Panc1 (cell line): ENCODE measurements at regions of chr16 and their contacts with region 1.

Region 1: GRCh38 chr16:16127469-16128116 is 95.7 kb downstream of the ABCC6 start:
- DNase-seq: peak; percentile 62
- ATAC-seq: peak; percentile 88
- H3K4me3 ChIP-seq: no peak overlapping the region
- H3K27ac ChIP-seq: 0 out of 2 replicates have a peak overlapping the region, but pooled peaks have one; percentile 15
- H3K4me1 ChIP-seq: no peaks in the 10 kb centered on the region
- H3K27me3 ChIP-seq: no peaks in the 10 kb centered on the region
- CTCF ChIP-seq: peak; percentile 96

Region 2: GRCh38 chr16:15765880-15766279 is 361.7 kb before region 1 on chr16:
- CTCF ChIA-PET with region 1: no interaction called
- POLR2A ChIA-PET with region 1: no interaction called
- in situ Hi-C with region 1: no loop called
- intact Hi-C with region 1: loop called (anchors 2 kb)
- DNase-seq: peak; percentile 36
- ATAC-seq: peak; percentile 93
- H3K4me3 ChIP-seq: no peak overlapping the region
- H3K27ac ChIP-seq: no peak overlapping the region
- H3K4me1 ChIP-seq: no peaks in the 10 kb centered on the region
- H3K27me3 ChIP-seq: no peaks in the 10 kb centered on the region; the same call in 1 of the 2 replicates
- CTCF ChIP-seq: peak; percentile 94

Region 3: DNA sequence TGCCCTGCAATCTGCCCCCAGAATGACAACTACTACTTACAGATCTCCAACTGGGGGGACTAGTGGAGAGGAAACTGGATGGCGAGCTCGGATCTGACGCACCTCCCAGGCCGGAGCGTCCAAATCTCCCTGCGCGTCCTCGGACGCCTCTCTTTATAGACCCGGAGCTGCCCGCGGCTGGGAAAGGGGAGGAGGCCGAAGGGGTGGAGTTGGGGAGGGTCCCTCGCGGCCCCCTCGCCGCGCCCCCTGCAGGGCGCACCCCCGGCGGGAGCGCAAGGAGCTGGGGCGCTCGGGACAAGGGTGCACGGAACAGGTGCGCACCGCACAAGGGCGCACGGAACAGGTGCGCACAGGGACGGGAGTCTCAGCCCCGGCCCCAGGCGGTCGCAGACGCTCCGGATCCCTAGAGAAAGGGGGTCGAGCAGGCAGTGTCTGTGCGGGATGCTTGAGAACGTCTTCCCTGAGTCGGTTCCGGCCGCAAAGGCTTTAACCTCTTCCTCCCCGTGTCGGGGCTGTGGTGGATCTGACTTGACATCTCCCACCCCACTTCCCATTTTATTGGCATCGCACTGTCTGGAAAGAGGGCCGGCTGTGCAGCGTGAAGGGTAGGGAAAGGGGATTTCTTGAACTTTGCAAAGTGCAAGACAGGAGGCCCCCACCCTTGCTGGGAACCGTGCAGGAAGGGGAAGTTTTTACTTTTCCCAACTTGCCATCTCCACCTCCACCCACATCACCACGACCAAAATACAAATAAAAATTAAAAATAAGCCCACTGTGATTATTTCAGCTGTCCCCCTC is 270.5 kb before region 1 on chr16 and contains the start of gene MYH11:
- CTCF ChIA-PET with region 1: no interaction called
- POLR2A ChIA-PET with region 1: interaction called, 12 read pairs
- in situ Hi-C with region 1: no loop called
- intact Hi-C with region 1: no loop called
- DNase-seq: no peak
- ATAC-seq: 0 out of 2 replicates have a peak, but pooled peaks have one; percentile 35
- H3K4me3 ChIP-seq: peak within 1 kb of the TSS; percentile 36 to 58
- H3K27ac ChIP-seq: no peak within 1 kb of the TSS
- H3K4me1 ChIP-seq: peaks cover 11% of the 10 kb centered on the region
- H3K27me3 ChIP-seq: peaks cover 25% of the 10 kb centered on the region
- CTCF ChIP-seq: no peak
- total RNA-seq, gene MYH11: 0.51 TPM

Region 4: GRCh38 chr16:15899538-15900100 is 228.0 kb before region 1 on chr16:
- CTCF ChIA-PET with region 1: interaction called, 11 read pairs
- POLR2A ChIA-PET with region 1: no interaction called
- in situ Hi-C with region 1: no loop called
- intact Hi-C with region 1: no loop called
- DNase-seq: peak; percentile 92
- ATAC-seq: peak; percentile 98
- H3K4me3 ChIP-seq: peak overlapping the region in 1 of 2 experiments; percentile 40; a peak in 2 of 4 replicates
- H3K27ac ChIP-seq: peak overlapping the region; percentile 80
- H3K4me1 ChIP-seq: peaks cover 29% of the 10 kb centered on the region
- H3K27me3 ChIP-seq: no peaks in the 10 kb centered on the region
- CTCF ChIP-seq: no peak

Region 5: DNA sequence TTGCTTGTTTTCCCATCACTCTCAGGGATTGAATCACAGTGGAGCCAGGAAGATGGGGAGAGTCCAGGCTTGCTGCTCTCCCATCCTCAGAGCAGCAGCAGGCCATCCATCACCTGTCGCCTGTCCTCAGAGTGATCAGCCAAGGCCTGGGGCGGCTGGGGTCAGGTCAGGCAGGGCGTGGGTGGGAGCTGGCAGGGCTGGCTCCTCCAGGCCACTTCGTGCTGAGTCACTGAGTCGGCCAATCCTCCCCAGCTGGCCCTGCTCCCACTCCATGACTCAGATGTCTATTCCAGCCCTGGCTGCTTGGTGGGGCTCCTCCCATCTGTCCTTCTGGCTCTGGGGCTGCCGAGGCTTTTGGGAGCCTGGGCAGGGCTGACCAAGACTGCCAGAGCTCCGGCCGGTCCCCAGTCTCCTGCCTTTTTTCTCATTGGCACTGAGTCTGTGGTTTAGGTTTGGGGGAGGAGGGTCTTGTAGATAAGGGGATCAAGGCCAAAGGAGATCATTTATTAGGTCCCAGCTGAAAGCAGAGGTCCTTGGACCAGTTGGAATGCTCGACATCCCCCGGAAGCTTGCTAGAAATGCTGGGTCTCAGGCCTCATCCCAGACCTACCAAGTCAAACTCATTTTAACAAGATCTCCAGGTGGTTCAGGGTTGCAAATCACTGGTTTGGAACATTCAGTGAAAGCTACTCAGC is 105.5 kb before region 1 on chr16:
- CTCF ChIA-PET with region 1: interaction called, 17 read pairs
- POLR2A ChIA-PET with region 1: no interaction called
- in situ Hi-C with region 1: no loop called
- intact Hi-C with region 1: no loop called
- DNase-seq: peak; percentile 96
- ATAC-seq: peak; percentile 93
- H3K4me3 ChIP-seq: peak overlapping the region in 1 of 2 experiments; percentile 18; a peak in 1 of 4 replicates
- H3K27ac ChIP-seq: peak overlapping the region; percentile 95
- H3K4me1 ChIP-seq: peaks cover 88% of the 10 kb centered on the region
- H3K27me3 ChIP-seq: no peaks in the 10 kb centered on the region
- CTCF ChIP-seq: no peak

Region 6: DNA sequence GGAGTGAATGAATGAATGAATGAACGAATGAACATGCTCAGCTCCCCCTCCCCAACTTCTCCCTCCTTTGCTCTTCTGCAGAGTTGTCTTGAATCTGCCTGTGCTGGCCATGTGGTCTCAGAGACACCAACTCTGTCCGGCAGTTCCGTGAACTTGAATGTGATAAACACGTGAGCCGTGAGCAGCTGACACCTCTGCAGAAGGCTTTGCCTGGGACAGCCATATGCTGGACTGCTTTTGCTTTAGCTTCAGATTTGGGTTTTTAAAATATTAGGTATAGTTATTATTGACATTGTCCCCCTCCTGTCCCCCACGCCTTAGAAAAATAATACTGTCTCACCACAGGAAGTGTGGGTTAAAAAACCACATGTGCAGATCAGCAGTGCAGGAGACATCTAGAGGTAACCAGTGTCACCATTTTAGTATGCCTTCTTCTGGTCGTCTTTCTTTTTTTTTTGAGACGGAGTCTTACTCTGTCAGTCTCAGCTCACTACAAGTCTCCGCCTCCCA is 94.3 kb before region 1 on chr16:
- CTCF ChIA-PET with region 1: no interaction called
- POLR2A ChIA-PET with region 1: no interaction called
- in situ Hi-C with region 1: loop called (anchors 10 kb)
- intact Hi-C with region 1: no loop called
- DNase-seq: no peak
- ATAC-seq: no peak
- H3K4me3 ChIP-seq: no peak overlapping the region
- H3K27ac ChIP-seq: no peak overlapping the region; the same call in 1 of the 2 replicates
- H3K4me1 ChIP-seq: peaks cover 6% of the 10 kb centered on the region
- H3K27me3 ChIP-seq: no peaks in the 10 kb centered on the region
- CTCF ChIP-seq: no peak

Region 7: DNA sequence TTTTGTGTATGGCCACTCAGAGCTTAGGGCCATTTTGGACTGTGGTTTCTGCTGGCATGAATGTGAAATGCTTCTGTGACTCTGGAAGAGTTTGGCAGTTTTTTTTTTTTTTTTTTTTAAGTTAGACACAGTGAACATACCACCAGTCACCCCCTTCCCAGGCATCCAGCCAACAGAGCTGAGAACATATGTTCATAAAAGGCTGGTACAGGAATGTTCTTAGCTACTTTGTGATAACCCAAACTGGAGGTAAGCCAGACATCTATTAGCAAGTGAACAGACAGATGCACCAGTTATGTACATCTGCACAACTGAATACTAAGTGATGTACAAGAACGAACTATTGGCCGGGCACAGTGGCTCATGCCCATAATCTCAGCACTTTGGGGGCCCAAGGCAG is 85.5 kb before region 1 on chr16:
- CTCF ChIA-PET with region 1: no interaction called
- POLR2A ChIA-PET with region 1: interaction called, 12 read pairs
- in situ Hi-C with region 1: loop called (anchors 10 kb)
- intact Hi-C with region 1: no loop called
- DNase-seq: no peak
- ATAC-seq: no peak
- H3K4me3 ChIP-seq: no peak overlapping the region
- H3K27ac ChIP-seq: no peak overlapping the region
- H3K4me1 ChIP-seq: 0 out of 2 replicates have a peak, but pooled peaks cover 2% of the 10 kb centered on the region
- H3K27me3 ChIP-seq: no peaks in the 10 kb centered on the region
- CTCF ChIP-seq: no peak